ENCODE measurements at regions of chr3 and their contacts with region 1.

Region 1: DNA sequence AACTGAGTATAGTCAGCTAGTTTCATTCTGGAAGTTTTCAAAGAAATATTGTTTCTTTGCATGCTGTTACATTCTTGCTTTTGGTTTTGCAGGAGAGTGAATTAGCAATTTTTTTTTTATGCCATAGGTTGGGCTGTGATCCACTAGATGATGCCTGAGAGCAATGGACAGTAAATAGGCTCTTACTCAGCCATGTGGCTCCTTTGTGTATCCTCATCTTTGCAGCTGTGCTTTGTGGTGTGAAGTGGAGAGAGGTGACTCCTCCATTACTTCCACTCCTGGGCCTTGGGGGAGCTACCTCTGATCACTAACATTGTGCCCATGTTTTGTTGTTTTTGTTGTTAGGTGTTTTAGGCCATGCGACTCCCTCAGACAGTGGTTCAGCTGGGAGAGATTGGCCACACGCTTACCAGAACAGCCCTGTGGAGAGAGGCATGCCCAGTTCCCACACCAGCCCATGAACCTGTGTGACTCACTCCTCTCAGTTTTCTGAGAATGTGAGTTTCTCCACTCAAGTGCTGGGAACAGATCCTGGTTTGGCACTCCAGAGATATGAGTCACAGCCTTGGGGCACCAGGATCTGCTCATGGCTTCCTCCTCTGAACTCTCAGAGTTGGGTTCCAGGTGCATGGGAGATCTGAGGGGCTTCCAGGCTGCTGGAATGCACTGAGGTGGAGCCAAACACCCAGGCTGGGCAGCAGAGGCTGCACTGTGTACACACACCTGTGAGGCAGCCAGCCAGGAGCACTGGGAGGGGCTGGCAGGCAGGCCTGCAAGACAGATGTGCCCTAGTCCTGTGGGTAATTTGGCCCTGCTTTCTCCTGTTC is 785.3 kb downstream of the ROBO2 start:
- DNase-seq: peak; percentile 78
- H3K4me3 Mint-ChIP-seq: no peak overlapping the region
- H3K27ac Mint-ChIP-seq: peak overlapping the region; percentile 88
- H3K4me1 Mint-ChIP-seq: peaks cover 19% of the 10 kb centered on the region
- H3K27me3 Mint-ChIP-seq: no peaks in the 10 kb centered on the region
- CTCF ChIP-seq: no peak

Region 2: DNA sequence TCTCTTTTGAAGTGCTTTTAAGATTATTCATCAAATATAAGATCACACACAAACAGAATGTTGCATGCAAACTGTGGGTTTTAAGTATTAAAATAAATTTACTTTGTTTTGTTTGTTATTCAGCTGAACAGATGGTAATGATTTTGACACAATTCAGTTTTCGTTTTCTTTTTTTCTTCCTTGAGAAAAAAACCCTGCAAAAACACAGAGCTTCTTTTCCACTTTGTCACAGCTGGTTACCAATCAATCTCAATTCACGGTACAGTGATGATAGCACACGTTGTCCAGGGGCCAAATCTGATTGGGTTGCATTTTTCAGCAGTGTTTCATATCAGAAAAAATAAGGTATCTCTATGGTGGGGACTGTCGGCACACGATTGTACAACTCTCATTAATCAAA is 311.7 kb before region 1 on chr3:
- CTCF ChIA-PET with region 1: no interaction called
- intact Hi-C with region 1: no loop called
- DNase-seq: no peak
- H3K4me3 Mint-ChIP-seq: no peak overlapping the region
- H3K27ac Mint-ChIP-seq: no peak overlapping the region
- H3K4me1 Mint-ChIP-seq: no peaks in the 10 kb centered on the region
- H3K27me3 Mint-ChIP-seq: no peaks in the 10 kb centered on the region
- CTCF ChIP-seq: no peak

Region 3: GRCh38 chr3:77772459-77772858 is 52.8 kb before region 1 on chr3:
- CTCF ChIA-PET with region 1: no interaction called
- intact Hi-C with region 1: no loop called
- DNase-seq: no peak
- H3K4me3 Mint-ChIP-seq: no peak overlapping the region
- H3K27ac Mint-ChIP-seq: no peak overlapping the region
- H3K4me1 Mint-ChIP-seq: no peaks in the 10 kb centered on the region
- H3K27me3 Mint-ChIP-seq: no peaks in the 10 kb centered on the region
- CTCF ChIP-seq: no peak

Region 4: DNA sequence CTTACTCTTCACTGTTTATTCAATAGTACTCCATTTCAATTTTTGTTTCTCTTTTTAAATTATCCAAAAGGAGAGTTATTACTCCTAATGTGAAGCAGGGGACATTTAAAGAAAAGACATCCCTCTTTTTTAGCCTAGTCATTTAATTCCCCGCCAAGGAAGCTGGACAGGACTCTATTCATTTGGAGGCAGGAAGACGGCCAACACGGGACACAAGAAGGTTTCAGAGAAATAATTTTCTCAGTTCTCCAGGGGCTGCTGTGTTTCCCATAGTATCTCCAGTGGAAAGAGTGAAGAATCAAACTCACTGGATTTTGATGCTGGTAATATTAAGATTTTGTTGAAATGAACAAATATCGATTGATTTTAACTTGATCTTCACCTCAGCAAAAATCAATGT is 48.4 kb after region 1 on chr3:
- CTCF ChIA-PET with region 1: no interaction called
- intact Hi-C with region 1: no loop called
- DNase-seq: no peak
- H3K4me3 Mint-ChIP-seq: no peak overlapping the region
- H3K27ac Mint-ChIP-seq: no peak overlapping the region
- H3K4me1 Mint-ChIP-seq: no peaks in the 10 kb centered on the region
- H3K27me3 Mint-ChIP-seq: no peaks in the 10 kb centered on the region
- CTCF ChIP-seq: no peak

Region 5: GRCh38 chr3:78204977-78205376 is 379.8 kb after region 1 on chr3:
- CTCF ChIA-PET with region 1: no interaction called
- intact Hi-C with region 1: loop called (anchors 5 kb)
- DNase-seq: peak; percentile 8
- H3K4me3 Mint-ChIP-seq: peak overlapping the region; percentile 36
- H3K27ac Mint-ChIP-seq: no peak overlapping the region
- H3K4me1 Mint-ChIP-seq: no peaks in the 10 kb centered on the region
- H3K27me3 Mint-ChIP-seq: no peaks in the 10 kb centered on the region
- CTCF ChIP-seq: no peak